ENCODE measurements at regions of chr3 and their contacts with region 1.

Region 1: DNA sequence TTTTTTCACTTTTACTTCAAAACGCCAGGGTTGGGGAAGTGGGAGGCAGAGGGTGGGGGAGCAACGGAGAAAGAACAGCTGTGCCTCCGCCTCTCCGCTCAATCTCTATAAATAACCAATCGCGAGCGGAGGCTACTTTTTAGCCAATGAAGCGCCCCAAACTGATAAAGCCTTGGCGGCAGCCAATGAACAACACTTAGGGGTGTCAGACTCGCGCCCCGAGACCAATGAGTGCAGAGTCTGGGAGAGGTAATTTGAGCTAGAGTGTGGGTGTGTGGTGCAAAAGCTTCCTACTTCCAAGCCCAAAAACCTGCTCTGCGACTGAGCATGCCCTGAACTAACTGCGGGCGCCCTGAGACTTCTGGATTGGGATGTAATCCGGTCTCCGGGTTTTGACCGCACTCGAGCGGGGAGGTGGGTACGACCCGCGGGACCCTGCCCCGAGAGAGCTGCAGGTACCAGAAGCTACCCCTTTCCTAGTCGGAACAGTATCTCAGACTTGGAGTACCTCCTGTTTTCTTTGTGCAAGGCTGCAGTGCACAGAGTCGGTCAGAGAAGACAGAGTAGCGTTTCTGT is 800 bp upstream of the RAP2B start:
- DNase-seq: peak; percentile 100
- ATAC-seq: peak; percentile 78
- H3K4me3 ChIP-seq: peak overlapping the region; percentile 73
- H3K27ac ChIP-seq: peak overlapping the region; percentile 98
- H3K4me1 ChIP-seq: peaks cover 4% of the 10 kb centered on the region; the same call in 1 of the 2 replicates
- H3K27me3 ChIP-seq: no peaks in the 10 kb centered on the region
- CTCF ChIP-seq: no peak
- POLR2A ChIP-seq: no peak
- RAD21 ChIP-seq: 0 out of 2 replicates have a peak, but pooled peaks have one; percentile 12

Region 2: DNA sequence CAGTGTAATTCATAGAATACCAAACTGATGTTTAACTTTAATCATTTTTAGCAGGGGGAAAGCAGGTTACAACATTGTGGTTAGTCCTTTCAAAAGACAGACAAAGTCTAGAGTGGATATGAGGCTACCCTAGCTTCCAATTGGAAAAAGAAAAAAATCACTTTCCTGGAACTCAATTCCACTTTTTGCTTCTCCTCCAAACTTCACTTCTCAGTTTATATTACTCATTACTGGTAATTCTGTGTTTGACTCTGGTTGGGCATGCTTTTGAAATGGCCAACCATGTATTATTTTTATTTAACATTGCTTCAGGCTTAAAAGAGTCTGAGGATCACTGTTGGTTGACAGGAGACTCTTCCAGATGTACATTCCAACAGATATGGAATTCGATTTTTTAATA is 85.6 kb after region 1 on chr3:
- CTCF ChIA-PET with region 1: no interaction called
- POLR2A ChIA-PET with region 1: interaction called, 3 read pairs
- dilution Hi-C with region 1: no loop called
- in situ Hi-C with region 1: no loop called
- intact Hi-C with region 1: loop called (anchors 2 kb)
- DNase-seq: peak; percentile 89
- ATAC-seq: peak; percentile 77
- H3K4me3 ChIP-seq: no peak overlapping the region
- H3K27ac ChIP-seq: peak overlapping the region; percentile 20; the same call in 1 of the 2 replicates
- H3K4me1 ChIP-seq: peaks cover 7% of the 10 kb centered on the region
- H3K27me3 ChIP-seq: no peaks in the 10 kb centered on the region
- CTCF ChIP-seq: no peak
- POLR2A ChIP-seq: no peak
- RAD21 ChIP-seq: no peak

Region 3: GRCh38 chr3:153257673-153258351 is 96.6 kb after region 1 on chr3:
- CTCF ChIA-PET with region 1: no interaction called
- POLR2A ChIA-PET with region 1: no interaction called
- dilution Hi-C with region 1: no loop called
- in situ Hi-C with region 1: no loop called
- intact Hi-C with region 1: no loop called
- DNase-seq: no peak
- ATAC-seq: peak; percentile 80
- H3K4me3 ChIP-seq: no peak overlapping the region
- H3K27ac ChIP-seq: no peak overlapping the region
- H3K4me1 ChIP-seq: no peaks in the 10 kb centered on the region
- H3K27me3 ChIP-seq: no peaks in the 10 kb centered on the region
- CTCF ChIP-seq: no peak
- POLR2A ChIP-seq: no peak
- RAD21 ChIP-seq: no peak

Region 4: GRCh38 chr3:153399636-153400035 is 238.4 kb after region 1 on chr3:
- CTCF ChIA-PET with region 1: no interaction called
- POLR2A ChIA-PET with region 1: no interaction called
- dilution Hi-C with region 1: no loop called
- in situ Hi-C with region 1: no loop called
- intact Hi-C with region 1: loop called (anchors 10 kb)
- DNase-seq: no peak
- ATAC-seq: peak; percentile 17; the same call in 1 of the 2 replicates
- H3K4me3 ChIP-seq: no peak overlapping the region
- H3K27ac ChIP-seq: no peak overlapping the region
- H3K4me1 ChIP-seq: no peaks in the 10 kb centered on the region
- H3K27me3 ChIP-seq: no peaks in the 10 kb centered on the region
- CTCF ChIP-seq: no peak
- POLR2A ChIP-seq: no peak
- RAD21 ChIP-seq: no peak

Region 5: GRCh38 chr3:153595186-153595815 is 434.1 kb after region 1 on chr3:
- CTCF ChIA-PET with region 1: no interaction called
- POLR2A ChIA-PET with region 1: no interaction called
- dilution Hi-C with region 1: no loop called
- in situ Hi-C with region 1: loop called (anchors 10 kb)
- intact Hi-C with region 1: loop called (anchors 1 kb)
- DNase-seq: peak; percentile 50
- ATAC-seq: peak; percentile 52; the same call in 1 of the 2 replicates
- H3K4me3 ChIP-seq: no peak overlapping the region
- H3K27ac ChIP-seq: no peak overlapping the region
- H3K4me1 ChIP-seq: 0 out of 2 replicates have a peak, but pooled peaks cover 2% of the 10 kb centered on the region
- H3K27me3 ChIP-seq: peaks cover 16% of the 10 kb centered on the region
- CTCF ChIP-seq: peak; percentile 75
- POLR2A ChIP-seq: no peak
- RAD21 ChIP-seq: peak; percentile 82

Region 6: DNA sequence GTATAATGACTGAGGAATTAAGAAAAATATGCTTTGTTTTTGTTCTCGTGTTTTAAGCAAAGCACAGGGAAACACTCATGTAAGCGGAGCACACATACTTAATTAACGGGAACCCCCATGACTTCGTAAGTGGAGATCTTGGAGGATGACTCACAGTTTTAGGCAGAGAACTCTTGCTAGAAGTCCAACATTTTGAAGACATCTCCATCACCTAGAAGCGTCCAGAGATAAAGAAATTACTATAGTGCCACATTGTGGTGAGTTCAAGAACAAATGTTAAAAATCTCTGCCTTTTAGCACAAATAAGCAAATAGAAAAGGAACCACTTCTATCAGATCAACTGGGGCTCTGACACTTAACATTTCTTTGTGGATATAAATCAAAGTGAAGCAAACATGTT is 765.9 kb after region 1 on chr3:
- CTCF ChIA-PET with region 1: no interaction called
- POLR2A ChIA-PET with region 1: no interaction called
- dilution Hi-C with region 1: no loop called
- in situ Hi-C with region 1: no loop called
- intact Hi-C with region 1: loop called (anchors 5 kb)
- DNase-seq: peak; percentile 60
- ATAC-seq: peak; percentile 77
- H3K4me3 ChIP-seq: no peak overlapping the region
- H3K27ac ChIP-seq: no peak overlapping the region
- H3K4me1 ChIP-seq: no peaks in the 10 kb centered on the region
- H3K27me3 ChIP-seq: no peaks in the 10 kb centered on the region
- CTCF ChIP-seq: peak; percentile 31
- POLR2A ChIP-seq: no peak
- RAD21 ChIP-seq: no peak